IMR-90 (cell line): ENCODE measurements at regions of chr17 and their contacts with region 1.

Region 1: DNA sequence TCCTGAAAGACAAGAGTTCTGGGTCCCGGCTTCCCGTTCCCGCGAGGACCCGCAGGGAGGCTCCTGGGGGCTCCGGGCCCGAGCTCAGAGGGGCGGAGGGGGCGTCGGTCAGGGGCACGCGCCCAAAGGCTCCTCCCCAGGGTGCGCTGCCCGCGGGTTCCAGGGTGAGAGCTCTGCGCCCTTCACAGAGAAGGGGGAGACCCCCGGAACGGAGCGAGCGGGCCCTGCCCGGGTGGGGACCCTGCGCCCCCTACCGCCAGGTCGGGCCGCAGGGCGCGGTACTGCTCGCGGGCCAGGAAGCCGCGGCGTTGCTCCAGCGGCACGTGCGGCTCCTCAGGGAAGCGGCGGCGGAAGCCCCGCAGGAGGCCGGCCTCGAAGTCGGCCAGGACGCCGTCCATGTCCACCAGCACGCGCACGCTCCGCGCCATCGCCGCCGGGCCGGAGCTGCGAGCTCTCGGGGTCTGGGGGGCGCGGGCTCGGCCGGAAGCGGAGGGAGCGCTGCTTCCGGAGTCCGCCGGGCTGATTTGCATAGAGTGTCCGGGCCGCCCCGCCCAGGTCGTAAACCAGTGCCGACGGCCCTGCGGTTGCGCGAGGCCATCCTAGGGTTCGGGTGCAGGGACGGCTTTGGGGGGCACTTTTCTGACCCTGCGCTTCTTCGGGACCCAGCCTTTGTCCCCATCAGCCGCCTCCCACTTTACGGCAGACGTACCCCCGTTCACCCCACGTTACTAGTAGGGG is at the start of gene NT5C:
- DNase-seq: peak; percentile 61
- ATAC-seq: peak; percentile 89
- H3K4me3 ChIP-seq: peak within 1 kb of the TSS; percentile 91
- H3K27ac ChIP-seq: peak within 1 kb of the TSS; percentile 87
- H3K4me1 ChIP-seq: no peaks in the 10 kb centered on the region; the same call in 1 of the 2 replicates
- H3K27me3 ChIP-seq: no peaks in the 10 kb centered on the region
- CTCF ChIP-seq: peak; percentile 62
- POLR2A ChIP-seq: peak; percentile 54; the same call in 1 of the 2 replicates
- RAD21 ChIP-seq: peak; percentile 41
- total RNA-seq, gene NT5C: 23.1 and 24.0 TPM in 2 replicates

Region 2: DNA sequence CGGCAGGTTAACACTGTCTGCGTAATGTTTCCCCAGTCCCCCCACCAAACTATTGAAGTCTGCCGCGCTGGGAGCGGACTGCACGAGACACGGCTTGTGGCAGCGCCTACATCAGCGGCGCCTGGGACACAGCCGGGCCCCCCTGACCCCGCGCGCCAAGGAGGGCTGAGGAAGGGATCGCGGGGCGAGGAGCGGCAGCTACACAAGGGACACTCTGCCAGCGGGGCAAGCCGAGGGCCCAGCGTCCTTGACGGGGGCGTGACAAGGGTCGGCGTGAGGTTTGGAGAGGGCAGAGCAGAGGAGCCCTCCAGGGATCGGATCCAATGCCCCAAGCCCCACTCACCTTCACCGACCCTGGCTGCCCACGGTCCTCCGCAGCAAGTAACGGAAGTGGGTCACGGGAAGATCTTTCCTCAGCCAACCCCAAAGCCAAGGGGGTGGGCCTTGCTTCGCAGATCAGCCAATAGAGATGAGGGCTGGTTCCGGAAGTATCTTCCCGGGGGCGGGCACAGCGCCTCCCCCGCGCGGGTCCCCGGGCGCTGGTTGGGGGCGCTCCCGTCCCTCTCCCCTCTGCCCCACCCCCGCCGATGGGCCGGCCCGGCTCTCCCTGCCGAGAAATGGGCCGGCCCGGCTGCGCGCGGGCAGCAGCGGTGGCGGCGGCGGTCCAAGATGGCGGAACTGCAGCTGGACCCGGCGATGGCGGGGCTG is 84.7 kb before region 1 on chr17 and contains the starts of genes ATP5PD and KCTD2:
- CTCF ChIA-PET with region 1: no interaction called
- POLR2A ChIA-PET with region 1: interaction called, 16 read pairs
- dilution Hi-C with region 1: no loop called
- in situ Hi-C with region 1: no loop called
- intact Hi-C with region 1: no loop called
- DNase-seq: peak; percentile 96
- ATAC-seq: peak; percentile 98
- H3K4me3 ChIP-seq: peak within 1 kb of the TSS; percentile 92
- H3K27ac ChIP-seq: peak within 1 kb of the TSS; percentile 95
- H3K4me1 ChIP-seq: no peaks in the 10 kb centered on the region; the same call in 1 of the 2 replicates
- H3K27me3 ChIP-seq: no peaks in the 10 kb centered on the region
- CTCF ChIP-seq: no peak
- POLR2A ChIP-seq: peak; percentile 74; the same call in 1 of the 2 replicates
- RAD21 ChIP-seq: no peak
- total RNA-seq, gene ATP5PD: 365 and 373 TPM in 2 replicates
- total RNA-seq, gene KCTD2: 9.1 and 9.4 TPM in 2 replicates

Region 3: DNA sequence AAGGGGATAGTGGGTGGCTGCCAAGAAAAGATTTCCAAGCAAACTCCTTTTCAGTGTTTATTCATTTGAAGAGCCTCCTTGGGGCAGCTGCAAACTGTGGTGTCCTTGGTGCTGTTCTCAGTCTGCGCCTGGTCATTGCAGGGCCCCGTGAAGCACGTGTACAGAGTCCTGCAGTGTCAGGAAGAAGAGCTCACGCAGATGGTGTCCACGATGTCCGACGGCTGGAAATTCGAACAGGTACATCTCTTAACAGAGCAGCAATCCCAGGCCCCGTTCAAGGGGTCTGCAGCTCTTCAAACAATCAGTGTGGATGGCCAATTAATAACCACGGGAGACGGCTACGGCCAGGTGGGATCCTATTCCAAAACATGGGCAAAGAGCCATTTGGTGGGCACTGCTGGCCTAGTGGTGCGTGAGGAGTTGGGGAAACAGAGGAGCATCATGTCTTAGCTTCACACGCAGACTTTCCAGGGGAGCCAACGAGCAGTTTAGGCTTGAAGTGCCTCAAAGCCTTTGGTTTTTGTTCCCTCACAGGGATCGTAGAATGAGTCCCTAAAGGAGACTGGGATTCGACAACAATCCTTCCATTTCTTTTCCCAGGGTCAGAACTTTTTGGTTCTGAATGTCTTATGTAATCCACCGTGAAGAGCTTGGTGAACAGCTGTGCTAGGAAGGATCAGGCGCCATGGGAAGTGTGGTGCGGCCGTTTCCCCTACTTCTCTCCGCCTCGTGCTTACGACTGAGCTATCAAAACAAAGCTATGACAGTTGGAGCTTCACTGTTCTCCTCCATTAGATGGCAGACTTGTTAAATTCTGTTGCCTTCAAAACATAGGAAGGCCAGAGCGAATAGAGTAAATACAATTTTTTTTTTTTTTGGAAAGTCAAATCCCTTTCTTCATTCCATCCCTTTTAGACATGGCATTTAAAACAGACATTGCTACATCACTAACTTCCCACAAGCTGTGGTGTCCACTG is 71.8 kb before region 1 on chr17:
- CTCF ChIA-PET with region 1: interaction called, 11 read pairs
- POLR2A ChIA-PET with region 1: no interaction called
- dilution Hi-C with region 1: no loop called
- in situ Hi-C with region 1: no loop called
- intact Hi-C with region 1: no loop called
- DNase-seq: peak; percentile 81
- ATAC-seq: peak; percentile 98
- H3K4me3 ChIP-seq: no peak overlapping the region
- H3K27ac ChIP-seq: no peak overlapping the region
- H3K4me1 ChIP-seq: peaks cover 6% of the 10 kb centered on the region; the same call in 1 of the 2 replicates
- H3K27me3 ChIP-seq: no peaks in the 10 kb centered on the region
- CTCF ChIP-seq: peak; percentile 77
- POLR2A ChIP-seq: no peak
- RAD21 ChIP-seq: peak; percentile 69

Region 4: DNA sequence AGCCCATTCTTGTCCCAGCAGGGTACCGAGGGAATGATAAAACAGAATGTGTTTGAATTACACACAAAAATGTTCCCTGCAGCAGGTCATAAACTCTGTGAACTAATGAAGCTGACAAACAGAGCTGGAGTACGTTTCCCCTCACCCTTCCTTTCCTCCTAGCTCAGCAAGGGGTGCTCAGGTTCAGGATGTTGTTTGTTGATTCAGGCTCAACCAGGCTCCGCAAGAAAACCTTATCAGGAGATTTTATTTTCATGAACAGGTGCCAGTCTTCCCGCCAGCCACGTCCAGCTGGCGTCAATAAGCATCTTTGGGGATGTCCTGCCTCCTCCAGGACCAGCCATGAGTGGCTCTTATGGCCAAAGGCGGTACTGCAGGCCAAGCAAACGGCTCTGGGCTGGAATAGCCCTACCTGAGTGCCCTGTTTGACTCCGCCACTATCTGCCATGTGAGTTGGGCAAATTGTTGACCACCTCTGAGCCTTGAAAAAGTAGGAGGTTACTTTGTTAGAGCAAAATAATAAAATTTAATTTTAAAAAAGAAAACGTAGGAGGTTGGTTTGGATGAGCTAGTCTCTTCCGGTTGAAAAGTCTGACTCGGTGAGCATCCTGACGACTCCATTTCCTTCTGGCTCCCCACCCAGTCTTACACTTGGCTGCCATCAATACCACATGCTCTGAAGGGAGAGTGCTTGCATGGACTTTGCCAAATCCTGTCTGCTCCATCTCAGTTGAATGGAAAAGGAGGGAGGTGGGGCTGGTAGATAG is 25.6 kb before region 1 on chr17:
- CTCF ChIA-PET with region 1: no interaction called
- POLR2A ChIA-PET with region 1: no interaction called
- dilution Hi-C with region 1: no loop called
- in situ Hi-C with region 1: no loop called
- intact Hi-C with region 1: no loop called
- DNase-seq: peak; percentile 40
- ATAC-seq: peak; percentile 70
- H3K4me3 ChIP-seq: no peak overlapping the region
- H3K27ac ChIP-seq: no peak overlapping the region
- H3K4me1 ChIP-seq: 0 out of 2 replicates have a peak, but pooled peaks cover 4% of the 10 kb centered on the region
- H3K27me3 ChIP-seq: peaks cover 2% of the 10 kb centered on the region; the same call in 1 of the 2 replicates
- CTCF ChIP-seq: peak; percentile 65
- POLR2A ChIP-seq: no peak
- RAD21 ChIP-seq: peak; percentile 55

Region 5: DNA sequence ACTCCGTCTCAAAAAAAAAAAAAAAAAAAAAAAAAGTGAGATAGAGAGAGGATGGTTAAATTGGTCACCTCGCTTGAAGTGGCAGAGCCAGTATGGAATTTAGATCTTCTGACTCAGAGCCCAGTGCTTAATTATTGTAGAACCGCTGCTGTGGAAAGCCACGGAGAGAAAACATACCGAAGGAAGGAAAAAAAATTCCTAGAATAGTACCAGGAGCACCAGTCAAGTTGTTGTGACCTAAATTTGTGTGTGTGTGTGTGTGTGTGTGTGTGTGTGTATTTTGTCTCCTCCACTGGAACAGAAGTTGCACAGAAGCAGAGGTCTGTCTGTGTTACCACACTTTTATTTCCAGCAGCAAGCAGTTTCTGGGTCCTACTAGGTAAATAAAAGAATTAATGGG is 63.4 kb after region 1 on chr17:
- CTCF ChIA-PET with region 1: no interaction called
- POLR2A ChIA-PET with region 1: no interaction called
- dilution Hi-C with region 1: no loop called
- in situ Hi-C with region 1: no loop called
- intact Hi-C with region 1: no loop called
- DNase-seq: no peak
- ATAC-seq: no peak
- H3K4me3 ChIP-seq: no peak overlapping the region
- H3K27ac ChIP-seq: no peak overlapping the region
- H3K4me1 ChIP-seq: no peaks in the 10 kb centered on the region
- H3K27me3 ChIP-seq: no peaks in the 10 kb centered on the region
- CTCF ChIP-seq: no peak
- POLR2A ChIP-seq: no peak
- RAD21 ChIP-seq: no peak

Region 6: GRCh38 chr17:76063875-76064546 is 932.6 kb after region 1 on chr17:
- CTCF ChIA-PET with region 1: no interaction called
- POLR2A ChIA-PET with region 1: no interaction called
- dilution Hi-C with region 1: no loop called
- in situ Hi-C with region 1: no loop called
- intact Hi-C with region 1: no loop called
- DNase-seq: no peak
- ATAC-seq: no peak
- H3K4me3 ChIP-seq: no peak overlapping the region
- H3K27ac ChIP-seq: no peak overlapping the region
- H3K4me1 ChIP-seq: no peaks in the 10 kb centered on the region
- H3K27me3 ChIP-seq: no peaks in the 10 kb centered on the region
- CTCF ChIP-seq: no peak
- POLR2A ChIP-seq: no peak
- RAD21 ChIP-seq: no peak